Left lung (tissue), 14 donors: ENCODE measurements at regions of chr1 and their contacts with region 1.

Region 1: DNA sequence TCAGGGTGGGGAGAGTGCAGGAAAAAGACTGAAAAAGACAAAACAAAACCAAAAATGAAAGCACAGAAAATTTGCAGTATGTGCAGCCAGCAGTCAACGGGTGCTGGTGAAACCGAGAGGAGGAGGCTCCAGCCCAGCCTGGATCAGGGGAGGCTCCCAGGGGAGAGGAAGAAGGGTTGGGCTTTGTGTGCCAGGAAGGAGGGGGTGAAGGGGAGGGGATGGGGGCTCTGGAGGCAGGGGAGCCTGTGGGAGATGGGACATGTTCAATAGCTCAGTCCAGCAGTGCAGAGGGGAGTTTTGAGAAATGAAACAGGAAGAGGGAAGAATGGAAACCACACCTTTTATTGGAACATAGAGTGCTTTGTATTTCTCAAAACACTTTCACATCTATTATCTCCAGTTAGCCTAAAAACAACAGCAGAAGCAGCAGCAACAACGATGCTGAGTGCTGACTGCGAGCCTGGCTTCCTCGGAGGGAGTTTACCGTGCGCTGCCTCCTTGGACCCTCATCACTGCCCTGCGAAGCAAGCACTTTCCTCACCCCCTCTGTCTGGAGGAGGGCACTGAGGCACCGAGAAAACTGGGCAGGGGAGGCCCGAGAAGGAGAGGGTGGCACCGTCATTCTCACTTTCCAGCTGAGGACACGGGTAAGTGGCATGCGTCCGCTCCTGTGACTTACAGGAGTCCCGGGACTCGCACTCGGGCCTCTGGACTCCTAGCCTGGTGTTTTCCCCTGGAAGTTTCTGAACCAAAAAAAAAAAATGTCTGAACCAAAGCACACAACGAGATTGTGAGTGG is 62.9 kb downstream of the MDM4 start:
- DNase-seq: no peak
- ATAC-seq: peak; percentile 60
- H3K4me3 ChIP-seq: no peak overlapping the region
- H3K27ac ChIP-seq: peak overlapping the region in 1 of 2 donors; percentile 3
- H3K4me1 ChIP-seq: peaks cover 0 to 14% of the 10 kb centered on the region in 2 donors
- H3K27me3 ChIP-seq: no peaks in the 10 kb centered on the region
- CTCF ChIP-seq: no peak

Region 2: DNA sequence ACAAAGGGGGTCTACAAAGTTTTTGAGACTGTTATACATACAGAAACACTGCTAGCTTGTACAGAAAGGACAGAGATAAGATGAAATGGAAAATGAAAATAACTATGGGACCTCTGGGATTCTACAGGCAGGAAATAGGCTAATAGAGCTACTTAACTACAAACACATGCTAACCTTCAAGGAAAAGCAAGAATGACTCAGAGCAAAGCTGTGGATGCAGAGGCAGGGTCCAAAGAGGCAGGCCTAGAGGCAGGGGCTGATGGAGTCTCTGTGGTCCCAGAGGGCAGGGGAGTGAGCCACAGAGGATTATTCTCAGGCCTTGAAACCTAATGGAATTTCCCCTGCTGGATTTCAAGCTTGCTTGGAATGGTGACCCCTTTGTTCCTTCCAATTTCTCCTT is 346.5 kb before region 1 on chr1:
- intact Hi-C with region 1: no loop called
- DNase-seq: no peak
- ATAC-seq: no peak
- H3K4me3 ChIP-seq: no peak overlapping the region
- H3K27ac ChIP-seq: no peak overlapping the region
- H3K4me1 ChIP-seq: no peaks in the 10 kb centered on the region
- H3K27me3 ChIP-seq: no peaks in the 10 kb centered on the region
- CTCF ChIP-seq: no peak

Region 3: DNA sequence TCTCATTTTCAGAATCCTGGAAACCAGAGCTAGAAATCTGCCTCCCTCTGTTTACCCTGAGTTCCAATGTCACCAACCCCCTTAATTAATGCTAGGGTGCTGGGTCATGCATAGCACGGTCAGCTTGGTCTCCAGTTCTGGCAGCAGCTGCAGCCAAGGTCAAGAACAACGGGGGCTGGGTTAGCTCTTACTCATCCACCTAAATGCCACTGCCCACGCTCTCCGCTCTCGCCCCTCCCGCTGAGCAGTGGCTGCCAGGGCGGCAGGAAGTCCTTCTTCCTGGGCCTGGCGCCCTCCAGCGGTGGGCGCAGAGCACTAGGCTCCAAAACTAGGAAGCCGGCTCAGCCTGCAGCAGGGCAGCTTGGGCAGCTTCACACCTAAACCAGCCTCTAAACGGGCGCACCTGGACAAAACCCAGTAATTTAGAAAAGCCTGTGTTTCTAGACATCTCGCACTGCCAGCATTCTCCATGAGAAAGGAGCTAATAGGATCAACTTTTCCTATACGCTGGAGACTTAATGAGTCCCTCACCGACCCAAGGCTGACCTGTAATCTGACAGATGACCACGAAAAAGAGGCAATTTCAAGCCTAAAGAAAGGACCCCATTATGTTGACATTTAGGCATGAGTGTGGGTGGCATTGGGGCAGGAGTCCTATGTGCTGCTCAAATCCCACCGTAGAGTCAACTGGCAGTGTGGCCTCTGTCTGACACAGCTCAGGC is 184.8 kb after region 1 on chr1:
- intact Hi-C with region 1: loop called in 1 of 2 experiments (anchors 10 kb)
- DNase-seq: peak; percentile 17 to 89 (median 60)
- ATAC-seq: peak; percentile 99
- H3K4me3 ChIP-seq: no peak overlapping the region
- H3K27ac ChIP-seq: no peak overlapping the region
- H3K4me1 ChIP-seq: peaks cover 0 to 8% of the 10 kb centered on the region in 2 donors
- H3K27me3 ChIP-seq: peaks cover 6 to 34% of the 10 kb centered on the region in 2 donors
- CTCF ChIP-seq: peak; percentile 70 to 76